Mammary epithelial cell (primary cell): ENCODE measurements at regions of chr7 and their contacts with region 1.

Region 1: GRCh38 chr7:49852619-49853462 is 79.4 kb downstream of the VWC2 start:
- DNase-seq: peak; percentile 61
- H3K4me3 ChIP-seq: no peak overlapping the region
- H3K27ac ChIP-seq: no peak overlapping the region
- H3K4me1 ChIP-seq: no peaks in the 10 kb centered on the region
- H3K27me3 ChIP-seq: no peaks in the 10 kb centered on the region
- CTCF ChIP-seq: peak; percentile 94 to 96

Region 2: DNA sequence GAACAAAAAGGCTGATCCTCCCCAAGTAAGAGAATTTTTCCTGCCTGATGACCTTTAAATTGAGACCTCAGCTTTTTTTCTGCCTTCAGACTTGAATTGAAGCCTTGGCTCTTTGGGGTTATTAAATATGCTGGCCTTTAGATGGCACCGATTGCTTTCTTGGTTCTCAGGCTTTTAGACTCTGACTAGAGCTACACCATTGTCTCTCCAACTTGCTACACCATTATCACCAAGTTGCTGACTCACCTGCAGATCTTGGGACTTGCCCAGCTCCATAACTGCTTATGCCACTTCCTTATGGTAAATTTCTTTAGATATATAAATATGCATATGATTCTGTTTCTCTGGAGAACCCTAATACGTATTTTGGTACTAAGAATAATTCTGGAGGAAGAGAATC is 1684.7 kb before region 1 on chr7:
- CTCF ChIA-PET with region 1: no interaction called
- dilution Hi-C with region 1: no loop called
- in situ Hi-C with region 1: no loop called
- intact Hi-C with region 1: loop called (anchors 10 kb)
- DNase-seq: peak; percentile 84
- H3K4me3 ChIP-seq: no peak overlapping the region
- H3K27ac ChIP-seq: no peak overlapping the region
- H3K4me1 ChIP-seq: peaks cover 10% of the 10 kb centered on the region
- H3K27me3 ChIP-seq: no peaks in the 10 kb centered on the region
- CTCF ChIP-seq: peak in 1 of 2 donors; percentile 42

Region 3: GRCh38 chr7:48708635-48709034 is 1144.2 kb before region 1 on chr7:
- CTCF ChIA-PET with region 1: no interaction called
- dilution Hi-C with region 1: no loop called
- in situ Hi-C with region 1: no loop called
- intact Hi-C with region 1: loop called (anchors 2 kb)
- DNase-seq: peak; percentile 44
- H3K4me3 ChIP-seq: no peak overlapping the region
- H3K27ac ChIP-seq: no peak overlapping the region
- H3K4me1 ChIP-seq: peaks cover 9% of the 10 kb centered on the region
- H3K27me3 ChIP-seq: no peaks in the 10 kb centered on the region
- CTCF ChIP-seq: peak; percentile 44 to 59

Region 4: GRCh38 chr7:49001610-49002033 is 851.2 kb before region 1 on chr7:
- CTCF ChIA-PET with region 1: no interaction called
- dilution Hi-C with region 1: no loop called
- in situ Hi-C with region 1: no loop called
- intact Hi-C with region 1: loop called (anchors 1 kb)
- DNase-seq: peak; percentile 31
- H3K4me3 ChIP-seq: no peak overlapping the region
- H3K27ac ChIP-seq: no peak overlapping the region
- H3K4me1 ChIP-seq: no peaks in the 10 kb centered on the region
- H3K27me3 ChIP-seq: peaks cover 2% of the 10 kb centered on the region
- CTCF ChIP-seq: peak; percentile 75 to 83